T-cell (primary cell): ENCODE measurements at regions of chr5 and their contacts with region 1.

Region 1: GRCh38 chr5:127492854-127493738 is 24.3 kb upstream of the PRRC1 start:
- DNase-seq: peak in 2 of 35 experiments; percentile 11 to 54
- ATAC-seq: peak in 3 of 4 experiments; percentile 41 to 67 (median 52)
- H3K4me3 ChIP-seq: no peak overlapping the region
- H3K4me3 Mint-ChIP-seq: no peak overlapping the region
- H3K27ac ChIP-seq: no peak overlapping the region
- H3K27ac Mint-ChIP-seq: no peak overlapping the region
- H3K4me1 ChIP-seq: no peaks in the 10 kb centered on the region
- H3K4me1 Mint-ChIP-seq: no peaks in the 10 kb centered on the region
- H3K27me3 ChIP-seq: peaks cover 0 to 3% of the 10 kb centered on the region in 2 experiments
- H3K27me3 Mint-ChIP-seq: peaks cover 18 to 25% of the 10 kb centered on the region in 2 donors

Region 2: DNA sequence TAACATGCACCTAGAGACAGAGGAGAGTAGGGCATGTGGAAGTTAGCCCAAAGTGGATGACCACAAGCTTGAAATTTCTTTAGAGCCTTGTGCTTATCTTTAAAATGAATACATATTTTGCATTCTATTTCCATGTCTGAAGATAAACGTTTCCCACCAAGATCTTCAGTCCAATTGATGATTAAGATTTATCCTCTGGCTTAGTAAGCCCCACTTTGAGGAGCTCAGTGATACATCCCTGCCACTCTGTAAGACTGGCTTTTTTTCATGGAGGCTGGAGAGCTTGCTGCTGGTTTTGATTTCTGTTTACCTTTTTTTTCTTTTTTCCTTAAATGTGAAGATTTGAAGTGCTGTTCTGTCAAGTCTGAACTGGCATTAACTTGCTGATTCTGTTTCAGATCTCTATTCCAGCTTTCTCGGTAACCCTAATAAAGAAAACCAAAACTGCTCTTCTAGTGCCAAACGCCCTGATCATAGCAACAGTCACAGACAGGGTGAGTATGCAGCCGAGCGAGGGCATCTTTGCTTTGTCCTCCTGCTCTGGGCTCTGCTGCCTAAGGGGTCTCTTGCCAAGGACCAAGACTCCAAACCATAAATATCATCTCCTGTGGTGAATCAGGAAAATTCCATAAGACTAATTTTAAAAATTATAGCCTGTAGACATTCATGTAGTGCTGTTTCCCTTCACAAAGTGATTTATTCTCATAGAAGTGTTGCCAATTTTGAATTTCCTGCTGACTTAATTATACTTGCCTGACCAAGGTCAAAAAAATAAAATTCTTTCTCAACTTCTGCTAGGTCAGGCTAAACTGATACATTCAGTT is 1015.6 kb before region 1 on chr5:
- CTCF ChIA-PET with region 1: no interaction called
- POLR2A ChIA-PET with region 1: no interaction called
- DNase-seq: no peak
- ATAC-seq: no peak
- H3K4me3 ChIP-seq: no peak overlapping the region
- H3K4me3 Mint-ChIP-seq: no peak overlapping the region
- H3K27ac ChIP-seq: no peak overlapping the region
- H3K27ac Mint-ChIP-seq: no peak overlapping the region
- H3K4me1 ChIP-seq: no peaks in the 10 kb centered on the region
- H3K4me1 Mint-ChIP-seq: no peaks in the 10 kb centered on the region
- H3K27me3 ChIP-seq: no peaks in the 10 kb centered on the region
- H3K27me3 Mint-ChIP-seq: no peaks in the 10 kb centered on the region

Region 3: DNA sequence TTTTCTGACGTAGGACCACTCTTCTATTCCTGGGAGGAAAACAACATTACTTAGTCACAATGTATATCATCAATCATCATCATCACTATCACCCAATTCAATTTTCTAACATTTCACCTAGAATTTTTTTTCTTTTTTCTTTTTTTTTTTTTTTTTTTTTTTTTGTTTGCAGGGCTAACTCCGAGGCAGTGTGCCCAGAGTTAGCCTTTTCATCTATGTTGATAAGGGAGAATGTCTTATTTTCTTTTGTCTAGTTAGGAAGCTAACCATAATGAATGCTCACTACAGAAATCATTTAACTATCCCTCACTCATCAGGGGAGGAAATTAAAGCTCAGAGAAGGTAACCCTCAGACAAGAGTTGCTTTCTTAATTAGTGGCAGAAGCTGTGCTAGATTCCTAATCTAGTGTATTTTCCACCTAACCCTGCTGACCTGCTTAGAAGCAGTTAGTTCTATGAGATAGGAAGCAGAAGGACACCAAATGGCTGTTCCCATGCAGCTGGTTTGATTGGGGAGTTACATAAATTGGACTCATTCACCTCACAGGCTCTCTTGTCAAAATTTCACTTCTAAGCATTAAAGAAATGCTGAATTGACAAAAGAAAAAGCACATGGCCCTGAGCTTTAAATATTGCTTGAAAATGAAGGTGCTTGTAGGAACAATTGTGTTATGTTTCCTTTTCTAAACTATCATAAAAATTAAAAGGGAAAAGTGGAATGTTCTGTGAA is 15.7 kb after region 1 on chr5:
- CTCF ChIA-PET with region 1: interaction called in 1 of 2 experiments, 3 read pairs
- POLR2A ChIA-PET with region 1: interaction called in 1 of 2 experiments, 19 read pairs
- DNase-seq: no peak
- ATAC-seq: no peak
- H3K4me3 ChIP-seq: no peak overlapping the region
- H3K4me3 Mint-ChIP-seq: no peak overlapping the region
- H3K27ac ChIP-seq: no peak overlapping the region
- H3K27ac Mint-ChIP-seq: no peak overlapping the region
- H3K4me1 ChIP-seq: no peaks in the 10 kb centered on the region
- H3K4me1 Mint-ChIP-seq: no peaks in the 10 kb centered on the region
- H3K27me3 ChIP-seq: peaks cover 0 to 7% of the 10 kb centered on the region in 2 experiments
- H3K27me3 Mint-ChIP-seq: peaks cover 23 to 24% of the 10 kb centered on the region in 2 donors

Region 4: DNA sequence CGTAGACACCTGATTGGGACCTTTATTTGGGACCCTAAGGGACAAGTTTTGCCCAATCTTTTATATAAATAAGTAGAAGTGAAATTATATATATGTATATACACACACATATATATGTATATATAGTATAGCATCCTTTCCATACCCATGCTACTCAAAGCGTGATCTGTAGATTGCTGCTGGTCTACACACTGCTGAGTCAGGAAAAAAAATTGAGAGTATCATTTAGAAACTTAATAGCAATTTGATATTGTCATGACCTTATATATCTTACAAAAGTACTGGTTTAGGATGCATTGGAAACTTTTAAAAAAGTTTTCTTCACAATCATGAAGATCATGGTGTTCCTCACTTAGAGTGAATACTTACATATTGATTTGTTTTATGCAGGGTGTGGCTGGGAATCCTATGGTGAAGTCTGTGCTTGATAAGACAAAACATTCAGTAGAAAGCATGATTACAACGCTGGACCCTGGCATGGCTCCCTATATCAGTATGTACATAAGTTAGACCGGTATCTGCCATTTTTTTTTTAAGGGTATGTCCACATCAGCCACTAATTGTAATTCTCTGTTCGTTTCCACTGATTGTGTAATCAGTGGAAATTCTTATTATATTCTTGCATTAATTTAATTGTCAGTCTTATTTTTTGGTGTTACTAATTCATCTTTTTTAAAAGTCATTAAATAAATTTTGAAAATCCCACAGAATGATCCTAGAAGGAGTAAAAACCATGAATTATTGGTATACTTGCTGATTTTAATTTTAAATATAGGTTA is 37.0 kb after region 1 on chr5:
- CTCF ChIA-PET with region 1: no interaction called
- POLR2A ChIA-PET with region 1: no interaction called
- DNase-seq: no peak
- ATAC-seq: no peak
- H3K4me3 ChIP-seq: no peak overlapping the region
- H3K4me3 Mint-ChIP-seq: no peak overlapping the region
- H3K27ac ChIP-seq: no peak overlapping the region
- H3K27ac Mint-ChIP-seq: no peak overlapping the region
- H3K4me1 ChIP-seq: no peaks in the 10 kb centered on the region
- H3K4me1 Mint-ChIP-seq: peaks cover 0 to 11% (median 0%) of the 10 kb centered on the region in 3 donors
- H3K27me3 ChIP-seq: no peaks in the 10 kb centered on the region
- H3K27me3 Mint-ChIP-seq: no peaks in the 10 kb centered on the region

Region 5: DNA sequence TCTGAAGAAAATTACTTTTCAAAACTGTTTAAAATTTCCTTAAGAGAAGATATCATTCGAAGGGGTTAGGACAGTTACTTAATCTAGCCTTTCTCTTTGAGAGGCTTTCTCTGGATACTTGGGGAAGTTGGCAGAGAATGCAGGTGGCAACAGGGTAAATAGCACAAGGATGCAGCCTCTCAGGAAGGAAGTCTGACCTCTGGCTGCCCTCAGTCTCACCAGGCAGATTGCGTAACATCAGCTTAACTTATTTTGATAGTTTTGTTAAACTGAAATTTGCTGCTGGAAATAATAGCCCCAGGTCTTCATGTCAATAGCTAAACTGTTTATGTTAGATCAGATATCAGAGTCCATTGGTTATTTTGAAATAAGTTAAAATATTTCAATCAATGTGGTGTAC is 230.5 kb after region 1 on chr5:
- CTCF ChIA-PET with region 1: no interaction called
- POLR2A ChIA-PET with region 1: no interaction called
- DNase-seq: no peak
- ATAC-seq: no peak
- H3K4me3 ChIP-seq: no peak overlapping the region
- H3K4me3 Mint-ChIP-seq: no peak overlapping the region
- H3K27ac ChIP-seq: no peak overlapping the region
- H3K27ac Mint-ChIP-seq: no peak overlapping the region
- H3K4me1 ChIP-seq: no peaks in the 10 kb centered on the region
- H3K4me1 Mint-ChIP-seq: no peaks in the 10 kb centered on the region
- H3K27me3 ChIP-seq: peaks cover 0 to 7% of the 10 kb centered on the region in 2 experiments
- H3K27me3 Mint-ChIP-seq: peaks cover 5 to 9% of the 10 kb centered on the region in 2 donors